Activated T-helper 1 cell treated with anti-CD3 and anti-CD28 coated beads, Interleukin-12 subunit alpha, Interleukin-12 subunit beta, Interleukin-2, Interleukin-4 antibody, amounts not matched to agents 30 ng/mL and 10 ng/mL and 1 ng/mL, durations not matched to agents 14 hours and 24 hours and 36 hours (primary cell): ENCODE measurements at regions of chr10 and their contacts with region 1.

Region 1: DNA sequence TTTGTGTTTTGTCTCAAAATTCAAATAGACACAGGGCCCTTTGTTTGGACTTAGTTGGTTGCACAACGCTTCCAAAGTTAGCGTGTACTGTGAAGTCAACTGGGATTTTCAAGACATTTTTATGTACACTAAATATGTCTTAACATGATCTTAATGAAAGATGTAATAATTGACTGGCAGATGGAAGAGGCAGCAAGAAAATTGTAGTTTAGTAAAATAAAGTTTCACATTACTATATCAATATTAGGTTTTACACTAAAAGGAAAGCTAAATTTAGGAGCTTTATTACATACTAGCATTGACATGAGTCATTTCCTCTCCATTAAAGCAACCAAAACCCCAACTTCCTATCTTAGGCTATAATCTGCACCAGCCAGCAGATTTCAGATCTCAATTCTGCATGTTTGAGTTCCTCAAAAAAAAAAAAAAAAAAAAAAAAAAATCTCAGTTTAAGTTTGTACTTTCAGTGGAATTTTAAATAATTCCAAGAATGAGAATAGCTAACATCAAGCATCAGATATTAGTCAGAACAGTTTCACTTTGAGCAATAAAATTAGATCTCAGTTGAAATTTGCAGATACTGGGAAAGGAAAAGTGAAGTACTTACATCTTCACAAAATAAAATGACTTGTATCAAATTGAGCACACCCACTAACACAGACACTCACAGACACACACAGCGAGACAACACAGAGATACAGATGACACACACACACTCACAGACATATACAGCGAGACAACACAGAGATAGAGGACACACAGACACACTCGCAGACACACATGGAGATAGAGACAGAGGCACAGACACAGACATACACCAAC is 346.6 kb upstream of the KLF6 start:
- DNase-seq: peak; percentile 49
- H3K4me3 Mint-ChIP-seq: no peak overlapping the region
- H3K27ac Mint-ChIP-seq: no peak overlapping the region
- H3K4me1 Mint-ChIP-seq: peaks cover 26% of the 10 kb centered on the region
- H3K27me3 Mint-ChIP-seq: no peaks in the 10 kb centered on the region

Region 2: DNA sequence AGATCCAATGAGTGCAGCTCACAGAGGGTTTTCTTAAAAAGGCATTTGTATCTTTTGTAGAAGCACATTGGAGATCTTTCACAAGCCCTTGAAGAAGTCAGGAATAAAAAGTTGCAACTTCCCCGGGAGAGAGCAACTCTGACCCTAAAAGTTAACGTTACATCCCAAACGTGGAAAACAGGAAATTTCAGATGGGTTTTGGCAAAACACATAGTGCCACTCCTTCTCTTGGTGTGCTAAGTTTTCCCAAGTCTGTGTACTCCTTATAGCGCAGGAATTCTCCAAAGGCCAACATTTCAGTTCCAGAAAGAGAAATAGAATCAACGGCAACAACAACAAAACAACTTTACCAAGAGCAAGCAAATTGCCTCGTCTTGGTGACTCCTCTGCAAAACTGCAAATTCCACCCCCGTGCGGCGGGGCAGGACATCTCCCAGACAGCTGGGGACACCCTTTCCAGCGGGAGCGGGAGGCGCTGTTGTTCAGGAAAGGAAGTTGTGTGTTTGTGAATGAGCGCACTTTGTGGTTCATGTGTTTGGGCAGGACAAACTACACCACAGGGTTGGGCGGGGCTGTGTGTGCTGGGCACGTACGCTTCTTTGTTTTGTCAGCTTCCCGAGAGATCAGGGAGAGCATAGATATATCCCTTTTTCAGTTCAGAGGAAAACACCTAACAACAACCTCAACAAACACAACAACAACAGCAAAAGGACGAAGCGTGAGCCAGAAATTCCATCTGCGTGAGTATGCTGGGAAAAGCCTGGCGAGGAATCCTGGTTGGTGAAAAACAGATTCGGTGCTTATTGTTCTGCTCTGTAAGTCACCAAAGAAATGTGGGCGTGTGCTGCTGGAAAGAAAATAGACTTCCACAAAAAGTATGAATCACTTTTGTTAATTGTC is 664.3 kb before region 1 on chr10:
- intact Hi-C with region 1: loop called (anchors 5 kb)
- DNase-seq: no peak
- H3K4me3 Mint-ChIP-seq: peak overlapping the region; percentile 62
- H3K27ac Mint-ChIP-seq: peak overlapping the region; percentile 90
- H3K4me1 Mint-ChIP-seq: peaks cover 53% of the 10 kb centered on the region
- H3K27me3 Mint-ChIP-seq: no peaks in the 10 kb centered on the region

Region 3: GRCh38 chr10:3811291-3811870 is 320.2 kb before region 1 on chr10:
- intact Hi-C with region 1: loop called (anchors 1 kb)
- DNase-seq: peak; percentile 61
- H3K4me3 Mint-ChIP-seq: peak overlapping the region; percentile 60
- H3K27ac Mint-ChIP-seq: peak overlapping the region; percentile 99
- H3K4me1 Mint-ChIP-seq: peaks cover 85% of the 10 kb centered on the region
- H3K27me3 Mint-ChIP-seq: no peaks in the 10 kb centered on the region

Region 4: DNA sequence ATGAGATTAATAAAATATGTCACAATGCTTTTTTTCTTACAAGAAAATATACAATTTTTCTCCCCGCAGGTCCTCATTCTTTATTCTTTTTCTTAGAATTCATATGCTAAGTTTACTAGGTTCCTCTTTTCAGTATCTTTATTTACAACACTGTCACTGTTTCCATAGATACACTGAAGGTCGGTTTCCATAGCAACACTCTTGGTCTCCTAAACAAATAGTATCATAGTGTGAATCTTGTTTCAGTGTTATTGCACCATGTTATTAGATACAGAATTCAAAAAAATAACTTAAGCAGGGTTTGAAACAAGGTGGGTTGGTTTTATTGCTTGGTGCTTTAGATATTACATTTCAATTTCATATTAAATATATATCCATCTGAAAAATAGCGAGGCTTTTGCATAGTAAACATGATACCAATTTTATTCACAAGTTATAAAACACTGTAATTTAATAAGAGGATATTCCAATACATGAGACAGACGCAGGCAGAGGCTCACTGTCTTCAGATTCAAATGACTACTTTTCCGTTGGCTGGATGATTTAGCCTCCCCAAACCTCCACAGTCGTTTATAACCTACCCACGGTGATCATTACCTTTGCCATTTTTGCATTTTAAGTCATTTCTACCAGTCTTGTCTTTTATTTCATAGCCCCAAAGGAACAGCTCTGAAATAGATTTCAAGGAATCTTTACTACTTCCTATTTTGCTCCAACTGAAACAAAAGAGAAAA is 257.7 kb before region 1 on chr10:
- intact Hi-C with region 1: loop called (anchors 1 kb)
- DNase-seq: no peak
- H3K4me3 Mint-ChIP-seq: peak overlapping the region; percentile 62
- H3K27ac Mint-ChIP-seq: peak overlapping the region; percentile 97
- H3K4me1 Mint-ChIP-seq: peaks cover 69% of the 10 kb centered on the region
- H3K27me3 Mint-ChIP-seq: no peaks in the 10 kb centered on the region

Region 5: GRCh38 chr10:4013651-4014121 is 117.9 kb before region 1 on chr10:
- intact Hi-C with region 1: loop called (anchors 2 kb)
- DNase-seq: peak; percentile 22
- H3K4me3 Mint-ChIP-seq: no peak overlapping the region
- H3K27ac Mint-ChIP-seq: no peak overlapping the region
- H3K4me1 Mint-ChIP-seq: peaks cover 21% of the 10 kb centered on the region
- H3K27me3 Mint-ChIP-seq: no peaks in the 10 kb centered on the region

Region 6: DNA sequence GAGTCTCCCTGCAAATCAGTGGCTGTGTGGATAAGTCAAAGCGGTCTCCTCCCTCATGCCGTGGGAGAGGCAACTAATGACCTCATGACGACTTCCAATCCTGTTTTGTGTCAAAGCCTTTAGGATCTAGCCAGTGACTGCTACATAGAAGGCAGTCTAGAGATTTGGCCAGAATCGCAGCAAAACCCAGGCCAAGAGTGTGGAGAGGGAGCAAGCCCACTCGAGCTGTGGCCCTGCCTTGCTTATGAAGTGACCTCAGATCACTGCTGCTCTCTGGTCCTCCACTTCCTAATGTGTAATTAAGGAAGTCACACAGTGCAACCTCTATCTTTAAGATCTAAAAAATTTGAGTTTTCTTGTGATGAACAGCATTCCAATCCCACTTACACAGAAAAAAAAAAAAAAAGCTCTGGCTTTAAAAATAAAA is 49.9 kb before region 1 on chr10:
- intact Hi-C with region 1: no loop called
- DNase-seq: no peak
- H3K4me3 Mint-ChIP-seq: no peak overlapping the region
- H3K27ac Mint-ChIP-seq: no peak overlapping the region
- H3K4me1 Mint-ChIP-seq: peaks cover 35% of the 10 kb centered on the region
- H3K27me3 Mint-ChIP-seq: peaks cover 8% of the 10 kb centered on the region

Region 7: GRCh38 chr10:4181621-4182049 is 50.0 kb after region 1 on chr10:
- intact Hi-C with region 1: loop called (anchors 2 kb)
- DNase-seq: no peak
- H3K4me3 Mint-ChIP-seq: peak overlapping the region; percentile 47
- H3K27ac Mint-ChIP-seq: peak overlapping the region; percentile 61
- H3K4me1 Mint-ChIP-seq: peaks cover 29% of the 10 kb centered on the region
- H3K27me3 Mint-ChIP-seq: peaks cover 1% of the 10 kb centered on the region